SK-N-SH (cell line): ENCODE measurements at regions of chr11 and their contacts with region 1.

Region 1: GRCh38 chr11:66677599-66678375 is at the start of gene RBM4B:
- DNase-seq: peak; percentile 98
- H3K4me3 ChIP-seq: peak within 1 kb of the TSS; percentile 60 to 63
- H3K27ac ChIP-seq: peak within 1 kb of the TSS; percentile 92 to 97
- H3K4me1 ChIP-seq: peaks cover 18 to 21% of the 10 kb centered on the region in 2 experiments
- H3K27me3 ChIP-seq: no peaks in the 10 kb centered on the region
- CTCF ChIP-seq: no peak
- EP300 ChIP-seq: no peak
- RAD21 ChIP-seq: no peak
- polyA plus RNA-seq, gene RBM4B: 31.1 and 43.3 TPM in 2 replicates

Region 2: GRCh38 chr11:66421492-66422205 is 256.1 kb before region 1 on chr11:
- CTCF ChIA-PET with region 1: interaction called, 10 read pairs
- POLR2A ChIA-PET with region 1: no interaction called
- DNase-seq: peak; percentile 82
- H3K4me3 ChIP-seq: peak overlapping the region in 1 of 2 experiments; percentile 36; a peak in 1 of 4 replicates
- H3K27ac ChIP-seq: no peak overlapping the region
- H3K4me1 ChIP-seq: peaks cover 4 to 14% of the 10 kb centered on the region in 2 experiments; a peak in 2 of 4 replicates
- H3K27me3 ChIP-seq: peaks cover 24% of the 10 kb centered on the region
- CTCF ChIP-seq: no peak
- EP300 ChIP-seq: no peak
- RAD21 ChIP-seq: no peak

Region 3: GRCh38 chr11:66545701-66546367 is 132.0 kb before region 1 on chr11 and contains the start of gene ZDHHC24:
- CTCF ChIA-PET with region 1: interaction called, 20 read pairs
- POLR2A ChIA-PET with region 1: interaction called, 9 read pairs
- DNase-seq: peak; percentile 99
- H3K4me3 ChIP-seq: peak within 1 kb of the TSS; percentile 84 to 88
- H3K27ac ChIP-seq: peak within 1 kb of the TSS; percentile 39 to 64; a peak in 3 of 4 replicates
- H3K4me1 ChIP-seq: peaks cover 0 to 10% of the 10 kb centered on the region in 2 experiments; a peak in 1 of 4 replicates
- H3K27me3 ChIP-seq: no peaks in the 10 kb centered on the region
- CTCF ChIP-seq: no peak
- EP300 ChIP-seq: no peak
- RAD21 ChIP-seq: no peak
- polyA plus RNA-seq, gene ZDHHC24: 12.6 and 13.1 TPM in 2 replicates

Region 4: DNA sequence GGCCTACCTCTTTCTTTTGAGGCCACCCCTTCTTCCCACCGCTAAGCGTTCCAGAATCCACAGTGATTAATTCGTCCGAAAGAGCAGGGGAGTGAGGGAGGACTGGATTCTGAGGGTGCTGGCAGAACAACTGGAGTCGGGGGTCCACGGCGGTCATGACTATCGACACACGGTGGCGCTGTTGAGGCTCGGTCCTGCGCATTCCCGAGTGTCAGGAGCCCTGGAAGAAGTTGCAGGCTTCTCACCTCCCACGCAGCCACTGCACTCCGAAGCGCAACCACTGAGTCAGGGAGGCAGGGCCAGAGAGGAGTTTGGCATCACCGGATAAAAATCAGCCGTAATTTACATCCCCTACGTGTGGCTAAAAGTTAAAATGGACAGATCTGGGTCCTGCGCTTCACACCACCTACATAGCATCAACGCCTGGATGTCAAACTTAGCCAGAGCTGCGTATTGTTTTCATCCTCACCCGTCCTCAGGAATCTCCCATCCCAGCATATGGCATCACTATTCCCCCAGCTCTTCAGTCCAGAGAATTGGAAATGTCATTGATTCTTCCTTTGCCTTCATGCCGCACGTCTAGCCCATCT is 98.7 kb before region 1 on chr11:
- CTCF ChIA-PET with region 1: interaction called, 54 read pairs
- POLR2A ChIA-PET with region 1: interaction called, 21 read pairs
- DNase-seq: peak; percentile 90
- H3K4me3 ChIP-seq: no peak overlapping the region
- H3K27ac ChIP-seq: no peak overlapping the region
- H3K4me1 ChIP-seq: peaks cover 0 to 2% of the 10 kb centered on the region in 2 experiments; a peak in 1 of 4 replicates
- H3K27me3 ChIP-seq: no peaks in the 10 kb centered on the region; the same call in 1 of the 2 replicates
- CTCF ChIP-seq: peak; percentile 81
- EP300 ChIP-seq: no peak
- RAD21 ChIP-seq: peak; percentile 77

Region 5: GRCh38 chr11:66638177-66639065 is 39.4 kb before region 1 on chr11 and contains the start of gene RBM4:
- CTCF ChIA-PET with region 1: interaction called, 5 read pairs
- POLR2A ChIA-PET with region 1: interaction called, 15 read pairs
- DNase-seq: peak; percentile 95
- H3K4me3 ChIP-seq: peak within 1 kb of the TSS; percentile 75 to 97
- H3K27ac ChIP-seq: peak within 1 kb of the TSS; percentile 88 to 94
- H3K4me1 ChIP-seq: peaks cover 42 to 43% of the 10 kb centered on the region in 2 experiments
- H3K27me3 ChIP-seq: no peaks in the 10 kb centered on the region
- CTCF ChIP-seq: peak; percentile 28
- EP300 ChIP-seq: no peak; a peak in 1 of 4 replicates
- RAD21 ChIP-seq: no peak
- polyA plus RNA-seq, gene RBM4: 202 and 222 TPM in 2 replicates

Region 6: GRCh38 chr11:66782724-66783123 is 104.9 kb after region 1 on chr11:
- CTCF ChIA-PET with region 1: no interaction called
- POLR2A ChIA-PET with region 1: no interaction called
- DNase-seq: no peak
- H3K4me3 ChIP-seq: no peak overlapping the region
- H3K27ac ChIP-seq: no peak overlapping the region
- H3K4me1 ChIP-seq: no peaks in the 10 kb centered on the region
- H3K27me3 ChIP-seq: no peaks in the 10 kb centered on the region
- CTCF ChIP-seq: no peak
- EP300 ChIP-seq: no peak
- RAD21 ChIP-seq: no peak

Region 7: DNA sequence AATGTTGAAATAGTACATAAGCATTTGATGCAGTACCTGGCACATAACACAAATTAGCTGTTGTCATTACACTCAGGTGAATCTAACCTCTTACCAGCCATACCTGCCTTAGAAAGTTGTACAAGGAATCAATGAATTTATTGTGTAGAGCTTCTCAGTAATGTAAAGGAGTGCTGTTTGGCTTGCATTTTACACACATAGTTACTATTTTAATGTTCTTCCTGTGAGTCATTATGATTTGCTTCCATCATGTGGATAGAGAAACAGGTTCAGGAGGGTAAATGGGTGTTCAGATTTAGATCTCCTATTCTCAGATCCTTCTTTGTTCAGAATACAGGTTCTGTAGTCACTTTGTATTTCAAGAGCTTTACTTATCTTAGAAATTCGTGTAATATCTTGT is 137.9 kb after region 1 on chr11:
- CTCF ChIA-PET with region 1: no interaction called
- POLR2A ChIA-PET with region 1: no interaction called
- DNase-seq: no peak
- H3K4me3 ChIP-seq: no peak overlapping the region
- H3K27ac ChIP-seq: peak overlapping the region in 1 of 2 experiments; percentile 39; a peak in 1 of 4 replicates
- H3K4me1 ChIP-seq: peaks cover 0 to 11% of the 10 kb centered on the region in 2 experiments; a peak in 2 of 4 replicates
- H3K27me3 ChIP-seq: no peaks in the 10 kb centered on the region
- CTCF ChIP-seq: no peak
- EP300 ChIP-seq: no peak
- RAD21 ChIP-seq: no peak